Activated B cell treated with CpG ODN at 0.5 μM for 24 hours (primary cell): ENCODE measurements at regions of chrX and their contacts with region 1.

Region 1: DNA sequence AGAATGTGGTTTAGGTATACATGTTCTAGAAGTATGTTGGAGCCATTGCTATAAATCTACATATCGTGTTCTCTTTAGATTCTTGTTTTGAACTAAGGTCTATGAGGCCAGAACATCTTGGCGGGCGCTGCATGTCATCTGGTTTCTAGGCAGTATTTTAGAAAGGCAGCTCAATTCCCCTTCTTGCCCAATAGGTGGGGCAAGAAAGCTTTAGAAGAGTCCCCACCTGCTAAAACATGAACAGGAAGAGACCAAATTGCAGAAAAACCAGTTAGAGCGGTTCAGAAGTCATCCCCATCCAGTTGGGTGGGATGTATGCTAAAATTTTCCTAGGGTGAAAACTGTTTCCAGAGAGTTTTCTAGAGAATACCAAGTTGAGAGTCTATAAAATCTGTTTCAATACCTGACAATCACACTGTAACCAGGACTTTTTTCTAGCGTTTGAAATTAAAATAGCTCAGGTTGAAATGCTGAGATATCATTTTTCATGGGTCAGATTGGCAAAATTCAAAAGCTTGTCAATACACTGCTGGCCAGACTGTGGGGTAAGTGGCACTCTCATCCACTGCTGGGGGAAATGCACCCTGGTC is 17.5 kb upstream of the SH3KBP1 start:
- DNase-seq: no peak
- ATAC-seq: peak; percentile 68
- H3K4me3 Mint-ChIP-seq: no peak overlapping the region
- H3K27ac Mint-ChIP-seq: no peak overlapping the region
- H3K4me1 Mint-ChIP-seq: peaks cover 12% of the 10 kb centered on the region
- H3K27me3 Mint-ChIP-seq: no peaks in the 10 kb centered on the region
- CTCF ChIP-seq: no peak

Region 2: DNA sequence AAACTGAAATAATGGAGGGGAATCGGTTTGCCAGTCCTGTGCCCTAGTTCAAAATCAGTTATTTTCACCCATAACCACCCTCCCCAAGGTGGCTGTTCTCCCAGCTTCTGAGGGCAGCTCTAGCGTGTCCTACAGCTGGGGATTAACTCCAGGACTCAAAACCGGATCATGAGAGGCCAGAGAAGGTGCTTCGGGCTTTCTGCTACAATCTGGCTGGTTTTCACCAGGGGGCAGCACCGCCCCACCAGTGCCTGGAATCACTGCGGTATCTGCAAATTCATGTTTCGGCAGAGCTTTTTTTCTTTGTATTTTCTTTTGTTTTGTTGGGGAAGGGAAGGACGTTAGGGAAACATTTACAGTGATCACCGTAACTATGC is 532.7 kb before region 1 on chrX:
- CTCF ChIA-PET with region 1: no interaction called
- POLR2A ChIA-PET with region 1: no interaction called
- intact Hi-C with region 1: loop called (anchors 5 kb)
- DNase-seq: peak; percentile 47
- ATAC-seq: peak; percentile 77
- H3K4me3 Mint-ChIP-seq: peak overlapping the region; percentile 85
- H3K27ac Mint-ChIP-seq: no peak overlapping the region
- H3K4me1 Mint-ChIP-seq: peaks cover 7% of the 10 kb centered on the region
- H3K27me3 Mint-ChIP-seq: no peaks in the 10 kb centered on the region
- CTCF ChIP-seq: no peak

Region 3: GRCh38 chrX:19739683-19740082 is 165.2 kb before region 1 on chrX:
- CTCF ChIA-PET with region 1: interaction called, 10 read pairs
- POLR2A ChIA-PET with region 1: no interaction called
- intact Hi-C with region 1: no loop called
- DNase-seq: no peak
- ATAC-seq: peak; percentile 57
- H3K4me3 Mint-ChIP-seq: no peak overlapping the region
- H3K27ac Mint-ChIP-seq: no peak overlapping the region
- H3K4me1 Mint-ChIP-seq: peaks cover 46% of the 10 kb centered on the region
- H3K27me3 Mint-ChIP-seq: no peaks in the 10 kb centered on the region
- CTCF ChIP-seq: no peak

Region 4: GRCh38 chrX:19785647-19786046 is 119.2 kb before region 1 on chrX:
- CTCF ChIA-PET with region 1: no interaction called
- POLR2A ChIA-PET with region 1: no interaction called
- intact Hi-C with region 1: no loop called
- DNase-seq: no peak
- ATAC-seq: no peak
- H3K4me3 Mint-ChIP-seq: no peak overlapping the region
- H3K27ac Mint-ChIP-seq: no peak overlapping the region
- H3K4me1 Mint-ChIP-seq: peaks cover 50% of the 10 kb centered on the region
- H3K27me3 Mint-ChIP-seq: no peaks in the 10 kb centered on the region
- CTCF ChIP-seq: no peak

Region 5: DNA sequence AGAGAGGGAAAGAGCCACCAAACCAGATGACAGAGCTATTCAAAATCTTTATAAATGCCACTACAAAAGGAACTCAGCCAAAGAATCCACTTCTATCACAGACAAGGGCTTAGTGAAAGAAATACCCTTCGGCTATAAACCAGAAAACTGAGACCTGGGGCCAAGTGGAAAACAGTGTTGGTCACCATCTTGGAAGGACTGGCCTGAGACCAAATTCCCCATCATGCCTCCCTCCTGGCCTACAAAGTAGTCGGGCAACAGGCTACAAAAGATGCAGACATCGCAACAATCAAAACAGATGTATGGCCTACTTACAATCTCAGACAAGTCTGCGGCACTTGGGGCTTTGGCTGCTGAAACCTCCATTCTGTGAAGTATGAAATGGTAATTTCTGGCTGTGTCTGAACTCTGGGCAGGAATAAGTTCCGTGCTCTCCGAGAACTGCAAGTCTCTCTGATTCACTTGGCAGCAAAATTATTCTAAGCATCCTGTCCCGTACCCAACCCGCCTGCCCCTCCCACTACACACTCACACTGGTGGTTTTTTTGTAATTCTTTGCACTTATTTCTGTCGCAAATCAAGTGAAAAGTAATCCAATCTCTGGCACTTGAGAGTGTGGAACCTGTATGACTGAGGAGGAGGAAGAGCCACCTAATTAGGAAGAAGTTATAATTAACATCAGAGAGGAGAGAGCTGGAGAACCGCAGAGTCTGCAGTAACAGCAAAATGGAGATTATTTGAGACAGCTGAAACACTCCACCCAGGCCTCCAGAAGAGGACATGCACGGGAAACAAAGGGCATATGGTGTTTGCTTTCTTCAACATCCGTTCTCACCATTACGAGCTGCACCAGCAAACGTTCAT is 105.3 kb before region 1 on chrX:
- CTCF ChIA-PET with region 1: no interaction called
- POLR2A ChIA-PET with region 1: no interaction called
- intact Hi-C with region 1: no loop called
- DNase-seq: no peak
- ATAC-seq: no peak
- H3K4me3 Mint-ChIP-seq: peak overlapping the region; percentile 41
- H3K27ac Mint-ChIP-seq: peak overlapping the region; percentile 81
- H3K4me1 Mint-ChIP-seq: peaks cover 53% of the 10 kb centered on the region
- H3K27me3 Mint-ChIP-seq: no peaks in the 10 kb centered on the region
- CTCF ChIP-seq: no peak

Region 6: GRCh38 chrX:19990556-19991349 is 85.9 kb after region 1 on chrX and contains the start of gene BCLAF3:
- CTCF ChIA-PET with region 1: interaction called, 4 read pairs
- POLR2A ChIA-PET with region 1: no interaction called
- intact Hi-C with region 1: loop called (anchors 1 kb)
- DNase-seq: peak; percentile 83
- ATAC-seq: peak; percentile 92
- H3K4me3 Mint-ChIP-seq: peak within 1 kb of the TSS; percentile 86
- H3K27ac Mint-ChIP-seq: peak within 1 kb of the TSS; percentile 85
- H3K4me1 Mint-ChIP-seq: peaks cover 16% of the 10 kb centered on the region
- H3K27me3 Mint-ChIP-seq: no peaks in the 10 kb centered on the region
- CTCF ChIP-seq: no peak
- total RNA-seq, gene BCLAF3: 11.6 and 15.3 TPM in 2 replicates

Region 7: GRCh38 chrX:20029728-20030127 is 124.9 kb after region 1 on chrX:
- CTCF ChIA-PET with region 1: no interaction called
- POLR2A ChIA-PET with region 1: no interaction called
- intact Hi-C with region 1: no loop called
- DNase-seq: no peak
- ATAC-seq: no peak
- H3K4me3 Mint-ChIP-seq: no peak overlapping the region
- H3K27ac Mint-ChIP-seq: no peak overlapping the region
- H3K4me1 Mint-ChIP-seq: no peaks in the 10 kb centered on the region
- H3K27me3 Mint-ChIP-seq: no peaks in the 10 kb centered on the region
- CTCF ChIP-seq: no peak

Region 8: DNA sequence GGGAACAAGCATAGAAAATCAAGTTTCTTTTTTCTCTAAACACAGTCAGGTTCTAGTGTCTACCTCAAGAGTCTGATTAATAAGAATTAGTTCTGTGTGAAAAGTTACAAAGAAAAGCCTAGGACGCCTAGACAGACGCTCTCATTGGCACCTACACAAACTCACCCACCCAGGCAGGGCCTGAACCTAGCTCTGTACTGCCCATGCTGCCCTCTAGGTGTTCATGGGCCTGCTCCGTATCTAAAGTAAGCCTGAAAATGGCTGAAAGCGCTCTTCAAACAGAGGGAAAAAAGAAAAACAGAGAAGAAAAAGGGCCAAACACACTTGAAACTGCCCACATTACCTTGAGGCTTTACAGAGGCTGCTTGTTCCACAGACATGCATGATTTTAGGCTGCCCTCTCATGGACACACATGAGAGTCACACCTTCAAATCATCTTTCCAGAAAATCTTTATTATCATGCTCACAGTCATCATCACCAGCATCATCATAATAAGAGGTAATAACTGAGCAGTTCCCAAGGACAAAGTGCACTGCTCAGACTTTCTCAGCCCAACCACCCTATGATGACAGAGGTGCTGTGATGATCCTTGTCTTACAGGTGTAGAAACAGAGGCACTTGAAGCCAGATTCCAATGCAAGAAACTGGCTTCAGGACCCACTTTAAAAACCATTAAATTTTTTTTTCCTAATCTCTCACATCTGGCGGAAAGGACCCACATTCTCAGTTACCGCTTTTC is 162.3 kb after region 1 on chrX:
- CTCF ChIA-PET with region 1: interaction called, 14 read pairs
- POLR2A ChIA-PET with region 1: no interaction called
- intact Hi-C with region 1: loop called (anchors 1 kb)
- DNase-seq: no peak
- ATAC-seq: peak; percentile 76
- H3K4me3 Mint-ChIP-seq: no peak overlapping the region
- H3K27ac Mint-ChIP-seq: no peak overlapping the region
- H3K4me1 Mint-ChIP-seq: peaks cover 3% of the 10 kb centered on the region
- H3K27me3 Mint-ChIP-seq: peaks cover 3% of the 10 kb centered on the region
- CTCF ChIP-seq: no peak

Region 9: DNA sequence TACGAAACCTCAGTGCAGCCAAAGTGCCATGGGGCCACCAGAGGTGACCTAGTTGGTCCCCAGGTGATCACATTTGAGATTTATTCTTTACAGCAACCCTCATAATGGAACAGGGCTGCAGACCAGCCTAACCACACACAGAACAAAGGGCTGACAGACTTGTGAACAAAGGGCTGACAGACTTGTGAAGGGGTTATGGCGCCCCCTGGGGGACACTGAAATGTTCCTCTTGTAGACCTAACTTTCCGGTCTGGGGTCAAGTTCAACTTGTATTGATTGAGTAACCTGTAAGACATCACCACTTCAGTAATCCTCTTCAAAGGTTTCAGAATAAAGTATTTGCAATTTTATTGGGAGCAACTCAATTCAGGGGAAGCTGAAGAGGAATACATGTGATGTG is 537.7 kb after region 1 on chrX:
- CTCF ChIA-PET with region 1: no interaction called
- POLR2A ChIA-PET with region 1: no interaction called
- intact Hi-C with region 1: loop called (anchors 5 kb)
- DNase-seq: peak; percentile 61
- ATAC-seq: peak; percentile 80
- H3K4me3 Mint-ChIP-seq: no peak overlapping the region
- H3K27ac Mint-ChIP-seq: no peak overlapping the region
- H3K4me1 Mint-ChIP-seq: no peaks in the 10 kb centered on the region
- H3K27me3 Mint-ChIP-seq: no peaks in the 10 kb centered on the region
- CTCF ChIP-seq: no peak